Sciatic nerve (tissue), 2 donors: ENCODE measurements at regions of chr4 and their contacts with region 1.

Region 1: DNA sequence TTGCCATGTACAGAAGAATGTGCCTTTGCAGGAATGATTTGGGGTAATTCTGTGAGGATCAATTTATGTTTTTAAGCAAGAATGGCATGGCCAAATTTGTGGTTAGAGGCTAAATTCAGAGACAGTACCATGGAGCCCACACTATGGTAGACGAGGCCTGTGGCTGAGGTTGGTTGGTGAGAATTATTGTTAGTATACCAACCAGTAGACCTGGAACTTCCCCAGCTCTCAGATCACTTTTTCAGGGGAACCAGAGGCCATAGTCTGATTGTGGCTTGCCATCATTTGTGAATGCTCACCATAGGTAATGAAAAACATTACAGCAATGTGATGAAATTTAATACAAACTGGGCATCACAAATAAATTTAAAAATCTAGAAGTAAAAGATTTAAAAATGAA is 56.3 kb downstream of the SHISA3 start:
- DNase-seq: no peak
- ATAC-seq: no peak

Region 2: DNA sequence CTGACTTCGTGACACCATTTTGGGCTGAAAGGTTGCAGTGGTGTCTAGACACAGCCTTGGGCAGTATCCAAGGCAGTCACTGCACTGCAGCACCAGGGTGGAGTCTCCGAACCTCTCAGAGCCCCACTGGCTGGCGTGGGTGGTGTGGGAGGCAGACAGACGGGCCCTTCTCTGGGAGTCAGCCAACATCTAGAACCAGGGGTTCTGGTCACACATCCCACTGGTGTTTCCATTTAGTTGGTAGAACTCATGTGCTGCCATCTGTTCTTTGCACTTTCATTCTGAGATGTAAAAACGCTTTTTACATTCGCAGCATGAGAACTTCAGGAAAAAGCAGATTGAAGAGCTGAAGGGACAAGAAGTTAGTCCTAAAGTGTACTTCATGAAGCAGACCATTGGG is 1193.3 kb before region 1 on chr4:
- intact Hi-C with region 1: loop called (anchors 5 kb)
- DNase-seq: no peak
- ATAC-seq: no peak

Region 3: DNA sequence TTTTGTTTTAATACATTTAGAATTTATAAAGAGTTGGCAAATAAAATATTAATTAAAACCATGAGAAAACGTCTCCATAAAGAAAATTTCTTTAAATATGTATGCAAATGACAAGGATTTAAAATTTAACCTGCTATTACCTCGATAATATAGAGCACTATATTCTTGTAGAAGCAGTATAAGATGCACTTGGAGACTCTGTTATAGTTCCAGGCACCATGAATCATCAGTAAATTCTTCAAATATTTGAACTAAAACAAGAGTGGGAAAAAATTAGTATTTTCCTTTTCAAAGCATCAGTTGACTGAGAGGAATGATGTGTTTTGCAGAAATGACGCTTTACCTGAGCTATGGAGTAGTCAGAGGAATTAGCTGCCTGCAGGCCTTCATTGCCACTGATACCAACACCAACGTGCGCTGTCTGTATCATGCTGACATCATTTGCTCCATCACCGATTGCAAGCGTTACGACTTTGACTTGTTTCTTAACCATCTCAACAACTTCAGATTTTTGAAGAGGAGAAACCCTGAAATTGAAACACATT is 11.0 kb after region 1 on chr4:
- intact Hi-C with region 1: loop called (anchors 1 kb)
- DNase-seq: no peak
- ATAC-seq: no peak